Activated naive CD4-positive, alpha-beta T cell treated with anti-CD3 and anti-CD28 coated beads for 36 hours (primary cell): ENCODE measurements at regions of chr6 and their contacts with region 1.

Region 1: DNA sequence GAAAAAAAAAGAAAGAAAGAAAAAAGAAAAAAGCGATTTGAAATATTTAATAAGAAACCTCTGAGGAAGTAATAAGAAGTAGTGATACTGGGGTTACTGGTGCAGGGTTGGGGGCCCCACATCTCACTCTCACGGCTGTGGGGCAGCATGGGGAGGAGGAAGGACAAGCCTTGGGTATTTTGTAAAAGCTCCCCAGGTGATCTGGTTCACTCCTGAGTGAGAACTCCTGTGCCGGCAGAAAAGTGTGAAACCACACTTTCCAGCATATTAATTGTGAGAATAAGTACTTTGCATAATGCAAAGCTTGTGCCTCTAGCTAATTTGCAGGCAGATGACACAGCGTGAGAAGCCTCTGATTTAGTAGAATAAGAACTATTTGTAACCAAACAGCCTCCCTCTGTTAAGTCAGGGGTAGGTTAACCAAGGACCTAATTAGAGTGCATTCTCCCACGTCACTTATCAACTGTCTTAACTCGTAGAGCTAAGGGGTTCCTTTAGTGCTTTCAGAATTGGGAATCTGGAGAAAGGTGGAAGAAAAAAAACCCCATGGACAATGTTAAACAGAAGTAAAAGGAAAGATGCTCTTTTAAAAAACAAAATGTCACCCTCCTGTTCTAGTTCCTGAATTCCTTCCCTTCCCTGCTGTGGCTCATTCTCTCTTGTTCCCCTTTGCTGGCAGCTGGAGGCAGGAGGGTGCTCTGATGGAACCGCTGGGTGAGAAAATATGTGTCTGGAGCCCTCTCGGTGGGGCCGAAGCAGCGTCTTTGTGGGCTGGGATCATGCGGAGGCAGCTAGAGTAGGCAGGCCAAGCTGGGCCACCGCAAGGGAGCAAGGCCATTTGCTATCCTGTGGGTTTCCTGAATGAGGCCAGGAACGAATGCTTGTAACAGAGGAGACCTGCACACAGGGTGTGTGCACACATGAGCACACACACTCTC is 108.7 kb downstream of the FYN start:
- DNase-seq: peak; percentile 84
- H3K4me3 Mint-ChIP-seq: peak overlapping the region; percentile 58
- H3K27ac Mint-ChIP-seq: peak overlapping the region; percentile 97
- H3K4me1 Mint-ChIP-seq: peaks cover 98% of the 10 kb centered on the region
- H3K27me3 Mint-ChIP-seq: no peaks in the 10 kb centered on the region

Region 2: GRCh38 chr6:111709615-111710398 is 54.7 kb before region 1 on chr6:
- CTCF ChIA-PET with region 1: interaction called, 6 read pairs
- intact Hi-C with region 1: loop called (anchors 2 kb)
- DNase-seq: peak; percentile 73
- H3K4me3 Mint-ChIP-seq: no peak overlapping the region
- H3K27ac Mint-ChIP-seq: peak overlapping the region; percentile 82
- H3K4me1 Mint-ChIP-seq: peaks cover 53% of the 10 kb centered on the region
- H3K27me3 Mint-ChIP-seq: no peaks in the 10 kb centered on the region

Region 3: DNA sequence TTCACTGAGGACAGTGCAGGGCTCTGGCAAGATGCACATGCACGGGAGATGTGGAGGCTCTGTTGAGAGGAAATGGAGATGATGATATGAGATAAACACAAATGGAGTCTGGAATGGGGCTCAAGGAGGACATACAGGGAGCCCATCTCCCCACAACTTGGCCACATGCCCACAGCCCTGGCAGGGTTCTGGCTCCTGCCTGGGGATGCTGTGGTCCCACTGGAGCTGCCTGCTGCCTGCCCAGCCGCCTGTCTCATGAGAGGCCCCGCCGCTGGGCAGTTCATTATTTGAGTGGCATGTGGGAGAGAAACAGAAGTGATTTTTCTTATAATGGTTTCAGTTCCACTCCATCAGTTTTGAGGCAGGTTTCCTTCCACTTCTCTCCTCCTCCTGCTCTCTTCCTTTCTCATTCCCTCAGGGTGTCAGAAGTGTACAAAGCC is 25.2 kb before region 1 on chr6:
- CTCF ChIA-PET with region 1: no interaction called
- intact Hi-C with region 1: no loop called
- DNase-seq: no peak
- H3K4me3 Mint-ChIP-seq: no peak overlapping the region
- H3K27ac Mint-ChIP-seq: peak overlapping the region; percentile 64
- H3K4me1 Mint-ChIP-seq: peaks cover 93% of the 10 kb centered on the region
- H3K27me3 Mint-ChIP-seq: no peaks in the 10 kb centered on the region

Region 4: DNA sequence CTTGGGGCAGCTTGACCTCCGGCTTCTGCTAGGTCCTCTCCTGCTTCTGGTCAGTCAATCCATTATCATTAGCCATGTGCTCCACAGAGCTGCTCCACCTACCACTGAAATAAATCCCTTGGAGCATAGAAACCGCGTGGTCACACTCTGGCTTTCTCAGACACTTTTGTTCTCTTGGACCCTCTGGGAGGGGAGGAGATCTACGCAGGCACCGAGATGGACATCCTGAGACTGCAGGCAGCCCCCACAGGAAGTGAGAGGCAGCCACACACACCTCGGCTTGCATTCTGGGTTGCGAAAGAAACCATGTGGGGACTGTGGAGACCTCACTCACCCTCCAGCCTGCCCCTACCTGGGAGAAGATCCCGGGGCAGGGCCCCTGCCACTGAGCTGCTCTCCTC is 29.2 kb after region 1 on chr6:
- CTCF ChIA-PET with region 1: interaction called, 4 read pairs
- intact Hi-C with region 1: loop called (anchors 1 kb)
- DNase-seq: peak; percentile 60
- H3K4me3 Mint-ChIP-seq: peak overlapping the region; percentile 42
- H3K27ac Mint-ChIP-seq: peak overlapping the region; percentile 88
- H3K4me1 Mint-ChIP-seq: peaks cover 75% of the 10 kb centered on the region
- H3K27me3 Mint-ChIP-seq: no peaks in the 10 kb centered on the region

Region 5: GRCh38 chr6:111823831-111824607 is 59.5 kb after region 1 on chr6:
- CTCF ChIA-PET with region 1: interaction called, 19 read pairs
- intact Hi-C with region 1: loop called (anchors 1 kb)
- DNase-seq: no peak
- H3K4me3 Mint-ChIP-seq: peak overlapping the region; percentile 39
- H3K27ac Mint-ChIP-seq: peak overlapping the region; percentile 89
- H3K4me1 Mint-ChIP-seq: peaks cover 83% of the 10 kb centered on the region
- H3K27me3 Mint-ChIP-seq: no peaks in the 10 kb centered on the region

Region 6: GRCh38 chr6:111888928-111889695 is 124.6 kb after region 1 on chr6:
- CTCF ChIA-PET with region 1: no interaction called
- intact Hi-C with region 1: no loop called
- DNase-seq: no peak
- H3K4me3 Mint-ChIP-seq: no peak overlapping the region
- H3K27ac Mint-ChIP-seq: no peak overlapping the region
- H3K4me1 Mint-ChIP-seq: no peaks in the 10 kb centered on the region
- H3K27me3 Mint-ChIP-seq: no peaks in the 10 kb centered on the region

Region 7: DNA sequence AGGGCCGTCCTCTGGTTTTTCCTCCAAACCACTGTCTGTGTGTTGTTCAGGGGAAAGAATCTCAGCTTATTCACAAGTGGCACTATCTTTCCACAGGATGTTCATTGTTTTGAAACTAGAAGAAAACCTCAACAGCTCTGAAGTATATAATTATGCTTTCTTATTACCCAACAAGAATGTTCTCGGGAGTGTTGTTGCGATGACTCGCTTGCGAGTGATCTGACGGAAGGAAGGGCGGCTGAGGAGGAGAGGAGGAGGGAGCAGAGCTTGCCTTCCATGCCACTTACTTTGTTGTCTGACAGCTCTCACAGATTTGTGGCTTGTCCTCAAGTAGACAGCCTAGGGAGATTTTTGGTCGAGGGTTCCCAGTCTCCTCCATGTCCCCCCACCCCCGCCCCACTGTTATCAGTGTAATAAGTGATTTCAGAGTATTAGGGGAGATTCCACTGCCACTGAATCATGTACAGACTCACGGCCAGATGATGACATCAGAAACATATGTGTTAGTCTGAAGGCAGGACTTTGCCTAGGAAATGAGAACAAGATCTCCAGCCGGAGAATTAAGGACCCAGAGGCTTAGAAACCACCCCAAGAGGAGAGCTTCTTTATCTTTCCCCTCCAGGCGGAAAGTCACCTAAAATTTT is 208.7 kb after region 1 on chr6:
- CTCF ChIA-PET with region 1: no interaction called
- intact Hi-C with region 1: loop called (anchors 1 kb)
- DNase-seq: peak; percentile 84
- H3K4me3 Mint-ChIP-seq: peak overlapping the region; percentile 70
- H3K27ac Mint-ChIP-seq: peak overlapping the region; percentile 96
- H3K4me1 Mint-ChIP-seq: peaks cover 70% of the 10 kb centered on the region
- H3K27me3 Mint-ChIP-seq: no peaks in the 10 kb centered on the region

Region 8: DNA sequence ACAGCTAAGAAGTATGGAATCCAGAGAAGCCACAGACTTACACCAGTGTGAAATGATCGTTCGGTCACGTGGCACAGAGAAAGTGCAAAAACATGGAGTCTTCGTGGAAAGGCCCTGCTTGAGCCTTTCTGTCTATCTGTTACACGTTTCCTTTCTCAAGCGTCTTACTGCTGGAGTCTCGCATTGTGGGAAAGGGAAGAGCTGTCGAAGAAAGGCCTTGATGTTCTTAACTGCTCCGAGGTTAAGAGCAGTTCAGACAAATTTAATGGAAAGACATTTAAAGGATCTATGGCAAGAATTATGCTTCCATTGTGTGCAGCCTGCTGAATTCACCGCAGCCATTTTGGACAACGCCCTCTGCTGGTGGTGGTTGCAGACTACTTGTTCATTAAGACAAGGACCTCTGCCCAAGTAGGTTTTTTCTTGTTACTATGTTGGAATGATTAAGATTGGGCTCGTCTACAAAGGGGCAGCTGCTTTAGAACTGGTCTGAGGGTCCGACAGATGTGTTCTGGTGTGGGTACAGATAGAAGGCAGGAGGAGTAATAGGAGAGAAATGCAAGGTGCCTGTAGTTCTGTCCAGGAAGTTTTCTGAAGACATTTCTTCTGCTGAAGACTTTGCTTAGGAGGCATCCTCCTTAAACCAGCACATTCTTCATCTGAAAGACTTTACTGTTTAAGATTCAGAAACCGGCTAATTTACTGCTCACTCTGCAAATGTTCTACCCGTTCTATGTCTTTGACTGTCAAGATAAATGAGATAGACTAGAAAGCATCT is 264.7 kb after region 1 on chr6:
- CTCF ChIA-PET with region 1: interaction called, 6 read pairs
- intact Hi-C with region 1: loop called (anchors 1 kb)
- DNase-seq: peak; percentile 91
- H3K4me3 Mint-ChIP-seq: no peak overlapping the region
- H3K27ac Mint-ChIP-seq: peak overlapping the region; percentile 90
- H3K4me1 Mint-ChIP-seq: peaks cover 81% of the 10 kb centered on the region
- H3K27me3 Mint-ChIP-seq: no peaks in the 10 kb centered on the region